Activated B cell treated with CpG ODN at 0.5 μM for 24 hours (primary cell): ENCODE measurements at regions of chr7 and their contacts with region 1.

Region 1: GRCh38 chr7:90629297-90629918 is 33.3 kb downstream of the CDK14 start:
- DNase-seq: no peak
- ATAC-seq: peak; percentile 86
- H3K4me3 Mint-ChIP-seq: no peak overlapping the region
- H3K27ac Mint-ChIP-seq: peak overlapping the region; percentile 19
- H3K4me1 Mint-ChIP-seq: peaks cover 16% of the 10 kb centered on the region
- H3K27me3 Mint-ChIP-seq: no peaks in the 10 kb centered on the region
- CTCF ChIP-seq: peak; percentile 68

Region 2: GRCh38 chr7:90455163-90456030 is 174.0 kb before region 1 on chr7:
- CTCF ChIA-PET with region 1: interaction called, 38 read pairs
- POLR2A ChIA-PET with region 1: no interaction called
- intact Hi-C with region 1: loop called (anchors 1 kb)
- DNase-seq: no peak
- ATAC-seq: peak; percentile 73
- H3K4me3 Mint-ChIP-seq: peak overlapping the region; percentile 46
- H3K27ac Mint-ChIP-seq: no peak overlapping the region
- H3K4me1 Mint-ChIP-seq: peaks cover 8% of the 10 kb centered on the region
- H3K27me3 Mint-ChIP-seq: peaks cover 6% of the 10 kb centered on the region
- CTCF ChIP-seq: peak; percentile 64

Region 3: GRCh38 chr7:90552521-90552920 is 76.9 kb before region 1 on chr7:
- CTCF ChIA-PET with region 1: interaction called, 11 read pairs
- POLR2A ChIA-PET with region 1: no interaction called
- intact Hi-C with region 1: loop called (anchors 1 kb)
- DNase-seq: no peak
- ATAC-seq: peak; percentile 34
- H3K4me3 Mint-ChIP-seq: no peak overlapping the region
- H3K27ac Mint-ChIP-seq: no peak overlapping the region
- H3K4me1 Mint-ChIP-seq: peaks cover 3% of the 10 kb centered on the region
- H3K27me3 Mint-ChIP-seq: peaks cover 3% of the 10 kb centered on the region
- CTCF ChIP-seq: no peak

Region 4: DNA sequence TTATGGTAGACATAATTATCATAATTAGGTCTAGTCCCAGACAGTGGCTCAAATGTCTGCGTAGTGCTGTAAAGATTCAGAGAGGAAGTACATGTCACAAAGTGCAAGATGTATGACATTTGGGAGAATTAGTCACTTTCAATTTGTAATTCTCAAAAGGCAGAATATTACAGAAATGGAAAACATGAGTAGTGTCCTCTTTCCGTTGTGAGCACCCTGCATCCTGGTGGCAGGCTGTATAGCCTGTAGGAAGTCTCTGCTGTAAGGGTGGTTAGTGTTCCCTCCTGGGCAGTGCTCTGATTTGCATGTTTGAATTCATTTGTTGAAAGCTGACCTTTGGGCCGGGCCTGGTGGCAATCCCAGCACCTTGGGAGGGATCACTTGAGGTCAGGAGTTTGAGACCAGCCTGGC is 16.3 kb before region 1 on chr7:
- CTCF ChIA-PET with region 1: interaction called, 4 read pairs
- POLR2A ChIA-PET with region 1: no interaction called
- intact Hi-C with region 1: loop called (anchors 2 kb)
- DNase-seq: no peak
- ATAC-seq: peak; percentile 90
- H3K4me3 Mint-ChIP-seq: peak overlapping the region; percentile 71
- H3K27ac Mint-ChIP-seq: peak overlapping the region; percentile 91
- H3K4me1 Mint-ChIP-seq: peaks cover 47% of the 10 kb centered on the region
- H3K27me3 Mint-ChIP-seq: no peaks in the 10 kb centered on the region
- CTCF ChIP-seq: no peak

Region 5: DNA sequence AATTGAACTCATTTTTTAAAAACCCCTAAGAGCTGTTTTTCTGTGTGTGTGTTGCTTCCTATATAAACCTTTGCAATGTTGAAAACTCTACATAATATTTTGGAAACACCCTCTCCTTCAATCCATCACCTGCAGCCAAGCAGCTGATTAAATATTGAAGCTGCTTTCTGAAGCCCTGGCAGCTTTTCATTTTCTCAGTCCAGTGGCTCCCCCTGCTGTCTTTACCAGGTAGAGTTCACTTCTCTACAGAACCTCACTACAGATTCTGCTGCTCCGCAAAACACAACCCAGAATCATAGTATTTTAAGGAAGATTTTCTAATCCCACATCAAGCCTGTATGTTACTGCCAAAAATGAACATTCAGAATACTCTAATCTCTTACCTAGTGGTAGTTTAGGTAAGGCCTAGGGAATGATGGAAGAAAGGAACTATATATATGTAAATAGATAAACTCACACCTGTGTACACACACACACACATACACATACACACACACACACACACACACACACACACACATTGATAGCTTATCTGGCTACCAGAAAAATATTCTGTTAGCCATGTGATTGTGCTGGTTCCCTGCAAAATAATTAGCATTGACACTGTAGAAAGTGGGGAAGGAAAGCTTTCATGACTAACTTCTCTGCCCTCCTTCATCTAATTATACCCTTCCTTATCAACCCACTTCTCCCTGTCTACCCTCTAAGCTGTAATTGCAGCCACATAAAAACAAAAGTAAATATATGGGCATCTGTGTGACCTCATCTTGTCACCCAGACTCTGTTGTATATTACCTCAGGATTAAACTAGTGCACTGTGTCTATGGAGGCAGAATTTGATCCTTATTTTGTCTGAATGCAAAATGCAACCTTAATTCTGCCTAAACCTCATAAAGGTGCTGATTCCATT is 405.3 kb after region 1 on chr7:
- CTCF ChIA-PET with region 1: interaction called, 3 read pairs
- POLR2A ChIA-PET with region 1: no interaction called
- intact Hi-C with region 1: loop called (anchors 2 kb)
- DNase-seq: no peak
- ATAC-seq: peak; percentile 61
- H3K4me3 Mint-ChIP-seq: no peak overlapping the region
- H3K27ac Mint-ChIP-seq: no peak overlapping the region
- H3K4me1 Mint-ChIP-seq: peaks cover 5% of the 10 kb centered on the region
- H3K27me3 Mint-ChIP-seq: no peaks in the 10 kb centered on the region
- CTCF ChIP-seq: no peak